ENCODE measurements at regions of chr1 and their contacts with region 1.

Region 1: GRCh38 chr1:157580179-157580827 is 17.6 kb downstream of the FCRL4 start:
- DNase-seq: no peak
- ATAC-seq: no peak
- H3K4me3 Mint-ChIP-seq: peak overlapping the region; percentile 28
- H3K27ac Mint-ChIP-seq: peak overlapping the region; percentile 78
- H3K4me1 Mint-ChIP-seq: peaks cover 75% of the 10 kb centered on the region
- H3K27me3 Mint-ChIP-seq: no peaks in the 10 kb centered on the region
- CTCF ChIP-seq: peak; percentile 80

Region 2: DNA sequence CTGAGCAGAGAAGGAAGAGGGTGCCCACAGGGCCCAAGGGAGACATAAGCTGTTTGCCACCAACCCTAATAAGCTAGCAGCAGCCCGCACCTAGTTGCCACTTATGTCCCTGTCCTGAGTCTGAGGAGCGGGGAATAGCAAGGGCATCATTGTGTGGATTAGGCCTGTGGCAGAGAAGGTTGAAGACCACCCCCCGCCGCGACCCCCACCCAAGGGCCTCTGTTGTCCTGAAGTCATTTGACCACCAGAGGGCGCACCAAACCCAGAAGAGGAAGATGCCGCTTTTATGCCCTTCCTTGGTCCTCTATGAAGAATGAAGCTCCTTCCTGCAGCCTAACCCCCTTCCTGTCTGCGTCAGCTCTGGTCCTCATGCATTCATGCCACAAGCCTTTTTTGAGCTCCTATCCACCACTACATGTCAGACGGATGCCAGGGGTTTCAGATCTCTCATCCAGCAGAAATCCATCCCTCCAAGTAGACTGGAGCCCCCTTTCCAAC is 1194.7 kb before region 1 on chr1:
- CTCF ChIA-PET with region 1: no interaction called
- POLR2A ChIA-PET with region 1: no interaction called
- intact Hi-C with region 1: no loop called
- DNase-seq: peak; percentile 59
- ATAC-seq: peak; percentile 71
- H3K4me3 Mint-ChIP-seq: no peak overlapping the region
- H3K27ac Mint-ChIP-seq: no peak overlapping the region
- H3K4me1 Mint-ChIP-seq: peaks cover 5% of the 10 kb centered on the region
- H3K27me3 Mint-ChIP-seq: peaks cover 37% of the 10 kb centered on the region
- CTCF ChIP-seq: no peak

Region 3: DNA sequence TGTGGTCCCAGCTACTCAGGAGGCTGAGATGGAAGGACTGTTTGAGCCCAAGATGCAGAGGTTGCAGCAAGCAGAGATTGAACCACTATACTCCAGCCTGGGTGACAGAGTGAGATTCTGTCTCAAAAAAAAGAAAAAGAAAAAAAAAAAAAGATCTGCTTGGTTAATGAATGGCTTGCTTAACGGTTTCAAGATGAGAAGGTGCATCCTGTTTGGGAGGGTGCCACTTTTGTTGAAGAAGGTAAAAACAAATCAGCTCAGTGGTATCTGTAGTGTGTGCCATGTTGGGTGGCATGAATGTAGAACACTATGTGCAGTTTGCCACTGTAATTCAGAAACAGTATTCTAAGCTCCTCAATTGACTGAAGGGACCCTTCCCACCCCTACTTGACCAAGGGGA is 347.2 kb before region 1 on chr1:
- CTCF ChIA-PET with region 1: no interaction called
- POLR2A ChIA-PET with region 1: no interaction called
- intact Hi-C with region 1: no loop called
- DNase-seq: no peak
- ATAC-seq: no peak
- H3K4me3 Mint-ChIP-seq: no peak overlapping the region
- H3K27ac Mint-ChIP-seq: no peak overlapping the region
- H3K4me1 Mint-ChIP-seq: no peaks in the 10 kb centered on the region
- H3K27me3 Mint-ChIP-seq: peaks cover 7% of the 10 kb centered on the region
- CTCF ChIP-seq: no peak

Region 4: GRCh38 chr1:157505481-157506272 is 74.6 kb before region 1 on chr1:
- CTCF ChIA-PET with region 1: interaction called, 16 read pairs
- POLR2A ChIA-PET with region 1: interaction called, 5 read pairs
- intact Hi-C with region 1: no loop called
- DNase-seq: peak; percentile 33
- ATAC-seq: peak; percentile 98
- H3K4me3 Mint-ChIP-seq: peak overlapping the region; percentile 69
- H3K27ac Mint-ChIP-seq: peak overlapping the region; percentile 50
- H3K4me1 Mint-ChIP-seq: peaks cover 37% of the 10 kb centered on the region
- H3K27me3 Mint-ChIP-seq: no peaks in the 10 kb centered on the region
- CTCF ChIP-seq: no peak

Region 5: DNA sequence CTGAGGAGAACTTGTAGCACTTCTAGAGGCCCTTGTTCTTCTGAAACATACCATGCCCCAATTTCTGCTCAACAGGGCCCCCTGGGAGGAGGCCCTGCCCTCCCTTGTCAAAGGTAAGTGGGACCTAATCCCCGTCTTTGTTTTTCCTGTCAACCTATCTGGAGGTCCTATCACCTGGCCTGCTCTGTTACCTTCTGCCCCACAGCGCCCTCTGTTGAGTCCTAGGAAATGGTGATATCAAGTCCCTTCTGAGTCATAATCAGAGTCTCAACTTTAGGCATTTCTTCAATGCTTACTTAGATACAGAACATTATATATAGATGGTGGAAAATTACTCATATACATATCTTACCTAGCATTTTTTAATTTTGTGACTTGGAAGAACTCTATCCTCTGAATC is 45.8 kb after region 1 on chr1:
- CTCF ChIA-PET with region 1: interaction called, 70 read pairs
- POLR2A ChIA-PET with region 1: interaction called, 4 read pairs
- intact Hi-C with region 1: loop called (anchors 1 kb)
- DNase-seq: peak; percentile 36
- ATAC-seq: peak; percentile 78
- H3K4me3 Mint-ChIP-seq: no peak overlapping the region
- H3K27ac Mint-ChIP-seq: no peak overlapping the region
- H3K4me1 Mint-ChIP-seq: peaks cover 16% of the 10 kb centered on the region
- H3K27me3 Mint-ChIP-seq: no peaks in the 10 kb centered on the region
- CTCF ChIP-seq: peak; percentile 47

Region 6: GRCh38 chr1:157704878-157705277 is 124.6 kb after region 1 on chr1:
- CTCF ChIA-PET with region 1: interaction called, 26 read pairs
- POLR2A ChIA-PET with region 1: interaction called, 16 read pairs
- intact Hi-C with region 1: no loop called
- DNase-seq: no peak
- ATAC-seq: peak; percentile 71
- H3K4me3 Mint-ChIP-seq: peak overlapping the region; percentile 42
- H3K27ac Mint-ChIP-seq: peak overlapping the region; percentile 74
- H3K4me1 Mint-ChIP-seq: peaks cover 95% of the 10 kb centered on the region
- H3K27me3 Mint-ChIP-seq: no peaks in the 10 kb centered on the region
- CTCF ChIP-seq: no peak

Region 7: GRCh38 chr1:157781048-157781447 is 200.7 kb after region 1 on chr1:
- CTCF ChIA-PET with region 1: interaction called, 161 read pairs
- POLR2A ChIA-PET with region 1: interaction called, 4 read pairs
- intact Hi-C with region 1: no loop called
- DNase-seq: no peak
- ATAC-seq: peak; percentile 22
- H3K4me3 Mint-ChIP-seq: peak overlapping the region; percentile 48
- H3K27ac Mint-ChIP-seq: peak overlapping the region; percentile 77
- H3K4me1 Mint-ChIP-seq: peaks cover 99% of the 10 kb centered on the region
- H3K27me3 Mint-ChIP-seq: no peaks in the 10 kb centered on the region
- CTCF ChIP-seq: no peak

Region 8: DNA sequence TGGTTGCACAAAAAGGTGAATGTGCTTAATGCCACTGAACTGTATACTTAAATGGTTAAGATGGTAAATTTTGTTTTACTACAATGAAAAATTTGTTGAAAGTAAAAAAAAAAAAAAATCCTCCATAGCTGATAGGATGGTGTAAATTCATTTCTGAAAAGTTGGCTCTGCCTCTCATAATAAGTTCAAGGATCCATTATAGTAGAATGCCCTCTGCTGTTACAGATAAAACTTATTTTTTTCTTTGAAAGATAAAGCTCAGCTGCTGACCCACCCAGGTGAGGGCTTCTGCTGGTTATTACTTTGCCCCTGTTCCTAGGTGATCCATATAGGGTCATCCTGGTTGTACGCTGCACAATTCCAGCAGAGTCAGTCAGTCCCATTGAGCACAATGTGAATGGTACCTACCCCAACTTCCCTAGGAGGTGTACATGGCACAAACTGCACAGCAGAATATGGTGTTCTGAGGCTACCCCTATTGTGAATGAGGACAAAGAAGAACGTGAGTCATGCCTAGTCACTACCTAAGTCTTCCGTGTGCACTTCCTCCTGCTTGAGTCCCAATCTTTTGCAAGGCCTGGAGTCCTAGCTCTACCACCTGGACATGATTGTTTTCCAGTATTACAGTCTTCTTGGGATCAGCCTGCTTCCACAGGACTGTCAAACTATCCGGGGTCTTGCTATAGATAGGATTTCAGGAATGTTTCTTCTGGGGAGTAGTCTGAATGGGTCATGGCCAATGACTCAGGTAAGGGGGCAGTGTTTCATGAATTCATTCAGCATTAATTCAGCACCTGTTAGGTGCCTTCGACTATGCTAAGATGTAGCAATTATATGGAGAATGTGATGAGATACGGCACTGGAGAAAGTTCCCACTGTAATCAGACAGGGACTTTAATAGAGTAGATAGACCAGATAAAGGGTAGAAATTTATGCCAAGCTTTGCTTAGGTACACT is 282.1 kb after region 1 on chr1:
- CTCF ChIA-PET with region 1: interaction called, 50 read pairs
- POLR2A ChIA-PET with region 1: interaction called, 13 read pairs
- intact Hi-C with region 1: loop called (anchors 1 kb)
- DNase-seq: no peak
- ATAC-seq: peak; percentile 47
- H3K4me3 Mint-ChIP-seq: no peak overlapping the region
- H3K27ac Mint-ChIP-seq: peak overlapping the region; percentile 31
- H3K4me1 Mint-ChIP-seq: peaks cover 18% of the 10 kb centered on the region
- H3K27me3 Mint-ChIP-seq: no peaks in the 10 kb centered on the region
- CTCF ChIP-seq: no peak

Region 9: DNA sequence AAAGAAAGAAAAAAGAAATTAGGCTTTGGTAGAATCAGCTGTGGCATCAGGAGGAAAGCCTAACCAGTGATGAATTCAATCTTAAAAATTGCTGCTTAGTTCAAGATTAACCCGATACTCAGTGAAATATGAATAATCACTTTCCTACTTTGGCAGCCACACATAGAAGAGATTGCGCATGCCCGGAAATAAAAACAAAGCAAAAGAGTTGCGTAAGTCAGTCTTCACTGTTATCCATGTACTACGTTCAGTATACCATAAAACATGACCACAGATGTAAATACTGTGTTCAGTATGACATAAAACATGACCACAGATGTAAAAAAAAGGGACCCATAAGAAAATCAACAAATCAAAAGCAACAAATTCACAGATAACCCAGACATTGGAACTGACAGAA is 619.5 kb after region 1 on chr1:
- CTCF ChIA-PET with region 1: no interaction called
- POLR2A ChIA-PET with region 1: no interaction called
- intact Hi-C with region 1: no loop called
- DNase-seq: no peak
- ATAC-seq: no peak
- H3K4me3 Mint-ChIP-seq: no peak overlapping the region
- H3K27ac Mint-ChIP-seq: no peak overlapping the region
- H3K4me1 Mint-ChIP-seq: peaks cover 25% of the 10 kb centered on the region
- H3K27me3 Mint-ChIP-seq: no peaks in the 10 kb centered on the region
- CTCF ChIP-seq: no peak

Measured in activated B cell treated with CpG ODN at 0.5 μM for 24 hours (primary cell).